Activated B cell treated with CpG ODN at 0.5 μM for 24 hours (primary cell): ENCODE measurements at regions of chr2 and their contacts with region 1.

Region 1: DNA sequence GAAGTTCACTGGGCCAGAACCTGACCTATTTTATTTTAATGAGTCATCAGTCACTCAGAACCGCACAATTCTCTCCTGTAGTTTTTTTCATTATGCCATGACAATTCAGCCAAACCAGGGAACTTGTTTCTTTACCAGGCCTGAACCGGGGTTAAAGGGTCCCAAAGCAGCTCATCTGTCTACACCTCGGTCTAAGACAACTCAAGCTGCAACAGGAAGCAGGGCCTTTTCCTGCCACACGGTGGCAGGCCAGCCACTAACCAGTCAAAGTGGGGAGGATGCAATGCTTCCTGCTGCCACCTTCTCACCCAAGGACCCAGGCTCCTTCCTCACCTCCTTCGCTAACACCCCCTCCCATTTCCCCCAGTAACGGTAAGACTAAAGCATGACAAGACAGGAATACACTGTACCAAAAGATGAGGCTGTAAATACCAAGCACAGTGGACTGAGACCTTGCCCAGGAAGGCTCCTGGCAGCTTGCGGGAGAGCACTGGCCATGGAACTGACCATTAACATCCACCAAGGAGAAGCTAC is 56.7 kb upstream of the ACKR3 start:
- DNase-seq: peak; percentile 53
- ATAC-seq: peak; percentile 98
- H3K4me3 Mint-ChIP-seq: no peak overlapping the region
- H3K27ac Mint-ChIP-seq: no peak overlapping the region
- H3K4me1 Mint-ChIP-seq: peaks cover 7% of the 10 kb centered on the region
- H3K27me3 Mint-ChIP-seq: peaks cover 2% of the 10 kb centered on the region
- CTCF ChIP-seq: no peak

Region 2: GRCh38 chr2:236352761-236353593 is 160.0 kb before region 1 on chr2:
- CTCF ChIA-PET with region 1: interaction called, 8 read pairs
- POLR2A ChIA-PET with region 1: no interaction called
- intact Hi-C with region 1: loop called (anchors 2 kb)
- DNase-seq: no peak
- ATAC-seq: peak; percentile 34
- H3K4me3 Mint-ChIP-seq: no peak overlapping the region
- H3K27ac Mint-ChIP-seq: no peak overlapping the region
- H3K4me1 Mint-ChIP-seq: peaks cover 2% of the 10 kb centered on the region
- H3K27me3 Mint-ChIP-seq: peaks cover 13% of the 10 kb centered on the region
- CTCF ChIP-seq: peak; percentile 85

Region 3: GRCh38 chr2:236526455-236527158 is 13.6 kb after region 1 on chr2:
- CTCF ChIA-PET with region 1: interaction called, 10 read pairs
- POLR2A ChIA-PET with region 1: no interaction called
- intact Hi-C with region 1: no loop called
- DNase-seq: no peak
- ATAC-seq: no peak
- H3K4me3 Mint-ChIP-seq: no peak overlapping the region
- H3K27ac Mint-ChIP-seq: no peak overlapping the region
- H3K4me1 Mint-ChIP-seq: no peaks in the 10 kb centered on the region
- H3K27me3 Mint-ChIP-seq: peaks cover 4% of the 10 kb centered on the region
- CTCF ChIP-seq: no peak

Region 4: GRCh38 chr2:236536727-236537398 is 23.9 kb after region 1 on chr2:
- CTCF ChIA-PET with region 1: interaction called, 24 read pairs
- POLR2A ChIA-PET with region 1: interaction called, 3 read pairs
- intact Hi-C with region 1: loop called (anchors 1 kb)
- DNase-seq: no peak
- ATAC-seq: peak; percentile 81
- H3K4me3 Mint-ChIP-seq: peak overlapping the region; percentile 79
- H3K27ac Mint-ChIP-seq: peak overlapping the region; percentile 88
- H3K4me1 Mint-ChIP-seq: peaks cover 54% of the 10 kb centered on the region
- H3K27me3 Mint-ChIP-seq: no peaks in the 10 kb centered on the region
- CTCF ChIP-seq: no peak

Region 5: DNA sequence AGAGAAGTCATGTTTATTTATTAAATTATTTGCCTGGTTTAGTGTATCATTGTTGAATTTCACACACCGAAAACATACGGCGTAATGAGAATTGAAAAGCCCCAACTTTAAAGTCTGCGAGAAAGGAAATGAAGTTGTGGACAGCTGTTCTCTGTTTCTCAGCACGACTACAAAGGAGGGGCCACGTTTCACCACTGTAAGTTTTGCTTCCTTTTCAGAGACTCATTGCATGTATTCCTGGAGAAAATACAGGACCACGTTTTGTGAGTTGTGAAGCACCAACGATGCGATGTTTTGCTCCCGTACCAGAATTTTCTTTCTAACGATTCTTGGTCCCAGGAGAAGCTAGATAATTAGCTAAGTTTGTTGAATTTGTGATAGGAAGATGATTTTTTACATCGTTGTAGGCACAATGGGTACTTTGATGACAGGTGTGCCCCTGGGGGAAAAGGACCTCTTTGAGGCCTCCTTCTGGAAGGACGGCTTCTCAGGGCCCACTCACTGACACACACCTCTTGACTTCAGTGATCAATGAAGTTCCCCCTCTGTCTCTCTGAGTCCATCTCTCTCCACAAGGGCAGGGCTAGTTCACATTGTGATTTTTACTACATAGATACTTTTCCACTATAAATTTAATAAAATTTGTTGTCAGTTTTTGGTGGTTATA is 33.0 kb after region 1 on chr2:
- CTCF ChIA-PET with region 1: interaction called, 11 read pairs
- POLR2A ChIA-PET with region 1: interaction called, 7 read pairs
- intact Hi-C with region 1: loop called (anchors 1 kb)
- DNase-seq: no peak
- ATAC-seq: peak; percentile 57
- H3K4me3 Mint-ChIP-seq: peak overlapping the region; percentile 78
- H3K27ac Mint-ChIP-seq: peak overlapping the region; percentile 98
- H3K4me1 Mint-ChIP-seq: peaks cover 78% of the 10 kb centered on the region
- H3K27me3 Mint-ChIP-seq: no peaks in the 10 kb centered on the region
- CTCF ChIP-seq: no peak

Region 6: GRCh38 chr2:237026981-237027711 is 514.2 kb after region 1 on chr2:
- CTCF ChIA-PET with region 1: interaction called, 8 read pairs
- POLR2A ChIA-PET with region 1: no interaction called
- intact Hi-C with region 1: loop called (anchors 1 kb)
- DNase-seq: no peak
- ATAC-seq: no peak
- H3K4me3 Mint-ChIP-seq: no peak overlapping the region
- H3K27ac Mint-ChIP-seq: no peak overlapping the region
- H3K4me1 Mint-ChIP-seq: no peaks in the 10 kb centered on the region
- H3K27me3 Mint-ChIP-seq: peaks cover 6% of the 10 kb centered on the region
- CTCF ChIP-seq: no peak

Region 7: GRCh38 chr2:237060534-237061312 is 547.8 kb after region 1 on chr2:
- CTCF ChIA-PET with region 1: interaction called, 4 read pairs
- POLR2A ChIA-PET with region 1: interaction called, 4 read pairs
- intact Hi-C with region 1: loop called (anchors 1 kb)
- DNase-seq: no peak
- ATAC-seq: no peak
- H3K4me3 Mint-ChIP-seq: no peak overlapping the region
- H3K27ac Mint-ChIP-seq: no peak overlapping the region
- H3K4me1 Mint-ChIP-seq: peaks cover 37% of the 10 kb centered on the region
- H3K27me3 Mint-ChIP-seq: no peaks in the 10 kb centered on the region
- CTCF ChIP-seq: no peak